Aorta (tissue), 5 donors: ENCODE measurements at regions of chrX and their contacts with region 1.

Region 1: GRCh38 chrX:74614093-74614909 is at the start of gene RLIM:
- DNase-seq: peak; percentile 95 to 96
- ATAC-seq: peak; percentile 98
- H3K4me3 ChIP-seq: peak within 1 kb of the TSS; percentile 54 to 80
- H3K27ac ChIP-seq: peak within 1 kb of the TSS; percentile 49 to 98
- H3K4me1 ChIP-seq: no peaks in the 10 kb centered on the region
- H3K27me3 ChIP-seq: no peaks in the 10 kb centered on the region
- total RNA-seq, gene RLIM: 36.9 to 40.0 TPM

Region 2: GRCh38 chrX:74551934-74552333 is 62.4 kb before region 1 on chrX:
- intact Hi-C with region 1: no loop called
- DNase-seq: no peak
- ATAC-seq: no peak
- H3K4me3 ChIP-seq: no peak overlapping the region
- H3K27ac ChIP-seq: no peak overlapping the region
- H3K4me1 ChIP-seq: no peaks in the 10 kb centered on the region
- H3K27me3 ChIP-seq: peaks cover 0 to 3% of the 10 kb centered on the region in 2 donors

Region 3: GRCh38 chrX:74924449-74925225 is 310.3 kb after region 1 on chrX:
- intact Hi-C with region 1: loop called in 1 of 2 experiments (anchors 10 kb)
- DNase-seq: peak; percentile 65 to 86
- ATAC-seq: peak; percentile 82
- H3K4me3 ChIP-seq: peak overlapping the region; percentile 3 to 43
- H3K27ac ChIP-seq: peak overlapping the region in 1 of 2 donors; percentile 13
- H3K4me1 ChIP-seq: peaks cover 0 to 1% of the 10 kb centered on the region in 2 donors
- H3K27me3 ChIP-seq: no peaks in the 10 kb centered on the region